Esophagus squamous epithelium (tissue), 5 donors: ENCODE measurements at regions of chr3 and their contacts with region 1.

Region 1: GRCh38 chr3:146177519-146177918 is 16.5 kb upstream of the PLOD2 start:
- DNase-seq: no peak
- H3K4me3 ChIP-seq: no peak overlapping the region
- H3K27ac ChIP-seq: peak overlapping the region in 1 of 4 donors; percentile 2
- H3K4me1 ChIP-seq: peaks cover 0 to 5% (median 4%) of the 10 kb centered on the region in 3 donors
- H3K27me3 ChIP-seq: no peaks in the 10 kb centered on the region
- CTCF ChIP-seq: no peak
- POLR2A ChIP-seq: no peak

Region 2: GRCh38 chr3:146065573-146066006 is 111.9 kb before region 1 on chr3:
- intact Hi-C with region 1: loop called (anchors 10 kb)
- DNase-seq: no peak
- H3K4me3 ChIP-seq: no peak overlapping the region
- H3K27ac ChIP-seq: no peak overlapping the region
- H3K4me1 ChIP-seq: no peaks in the 10 kb centered on the region
- H3K27me3 ChIP-seq: no peaks in the 10 kb centered on the region
- CTCF ChIP-seq: peak in 5 of 6 experiments; percentile 53 to 84 (median 76)
- POLR2A ChIP-seq: no peak